Activated CD4-positive, alpha-beta T cell treated with anti-CD3 and anti-CD28 coated beads, Interleukin-2, amount 10 ng/mL, durations not matched to agents 24 days and 14 days (primary cell): ENCODE measurements at regions of chr13 and their contacts with region 1.

Region 1: DNA sequence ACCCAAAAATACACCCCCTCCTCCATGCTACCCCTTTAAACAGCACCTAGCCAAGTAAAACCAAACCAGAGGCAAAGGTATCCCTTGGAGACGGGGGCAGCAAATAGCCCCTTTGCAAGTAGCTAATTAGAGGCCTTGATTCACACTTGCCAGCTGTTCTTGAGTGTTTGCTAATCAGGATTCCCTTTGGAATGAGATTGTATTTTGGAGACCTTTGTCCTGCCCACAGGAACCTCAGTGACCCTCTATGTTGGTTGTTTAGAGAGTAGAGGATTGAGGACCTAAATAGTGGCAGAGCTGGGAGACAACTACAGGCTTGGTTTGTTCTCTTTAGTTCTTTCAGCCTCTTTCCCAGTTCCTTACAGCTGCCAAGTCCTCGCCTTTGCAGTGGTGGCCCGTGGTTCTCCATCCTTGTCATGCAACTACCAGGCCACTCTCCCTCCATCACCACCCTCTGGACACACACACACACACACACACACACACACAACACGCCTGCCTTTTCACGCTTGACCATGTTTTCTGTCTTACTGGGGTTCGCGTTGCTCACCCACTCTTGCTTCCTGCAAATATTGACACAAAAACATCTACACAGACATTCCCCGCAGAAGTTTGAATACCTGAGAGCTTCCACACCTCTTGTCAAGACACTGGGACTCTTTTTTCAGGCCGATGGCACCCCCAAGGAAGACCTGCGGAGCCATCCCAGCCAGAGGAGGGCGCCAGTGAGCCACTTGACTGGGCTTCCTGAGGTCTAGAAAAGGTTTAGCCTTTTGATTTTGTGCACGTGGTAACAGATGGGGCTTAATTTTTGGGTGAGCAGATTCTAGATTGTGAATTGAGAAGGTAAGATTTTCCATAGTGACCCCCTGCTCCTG is 80.0 kb upstream of the GPR183 start:
- DNase-seq: peak; percentile 94
- H3K4me3 Mint-ChIP-seq: no peak overlapping the region
- H3K27ac Mint-ChIP-seq: peak overlapping the region; percentile 62
- H3K4me1 Mint-ChIP-seq: peaks cover 46% of the 10 kb centered on the region
- H3K27me3 Mint-ChIP-seq: no peaks in the 10 kb centered on the region

Region 2: DNA sequence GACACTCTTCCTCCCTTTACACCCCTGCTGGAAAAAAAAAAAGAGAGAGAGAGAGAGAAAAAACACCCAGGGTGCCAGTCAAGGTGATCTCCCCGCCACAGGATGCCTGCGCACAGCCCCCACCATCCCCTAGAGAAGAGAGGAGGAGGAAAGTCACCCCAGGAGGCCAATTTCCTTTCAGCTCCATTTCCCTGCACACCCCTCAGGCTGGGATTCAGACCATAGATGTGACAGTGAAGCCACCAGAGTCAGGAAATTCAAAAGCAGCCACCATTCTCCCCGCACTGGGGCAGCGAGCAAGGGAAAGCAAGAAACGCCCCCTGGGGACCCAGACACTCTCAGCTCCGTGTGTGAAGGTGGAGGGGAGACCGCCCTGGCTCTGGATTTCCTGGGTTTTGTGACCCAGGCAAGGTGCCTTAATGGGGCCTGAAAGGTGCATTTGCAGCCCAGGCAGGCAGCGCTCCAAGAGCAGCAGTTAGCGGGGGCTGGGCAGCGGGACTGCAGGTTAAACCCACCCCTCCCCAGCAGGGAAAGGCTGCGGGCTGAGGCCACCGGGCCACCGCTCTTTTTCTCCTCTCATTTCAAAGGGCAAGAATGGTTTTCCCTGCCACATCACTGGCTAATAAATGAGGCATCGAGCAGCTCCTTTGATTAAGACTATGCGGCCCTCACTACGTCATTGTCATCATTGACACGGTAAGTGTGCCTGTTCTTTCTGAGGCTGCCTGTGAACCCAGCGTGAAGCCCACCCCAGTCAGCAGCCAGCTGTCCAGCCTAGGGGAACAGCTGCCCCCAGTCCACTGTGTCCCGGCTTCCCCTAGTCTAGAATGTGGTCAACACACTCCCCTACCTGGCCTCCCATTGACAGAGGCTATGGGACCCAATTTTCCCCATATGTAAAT is 30.3 kb after region 1 on chr13:
- intact Hi-C with region 1: loop called (anchors 2 kb)
- DNase-seq: no peak
- H3K4me3 Mint-ChIP-seq: peak overlapping the region; percentile 28
- H3K27ac Mint-ChIP-seq: no peak overlapping the region
- H3K4me1 Mint-ChIP-seq: peaks cover 50% of the 10 kb centered on the region
- H3K27me3 Mint-ChIP-seq: peaks cover 2% of the 10 kb centered on the region